Left ventricle myocardium superior (tissue), 1 donor: ENCODE measurements at regions of chr17 and their contacts with region 1.

Region 1: DNA sequence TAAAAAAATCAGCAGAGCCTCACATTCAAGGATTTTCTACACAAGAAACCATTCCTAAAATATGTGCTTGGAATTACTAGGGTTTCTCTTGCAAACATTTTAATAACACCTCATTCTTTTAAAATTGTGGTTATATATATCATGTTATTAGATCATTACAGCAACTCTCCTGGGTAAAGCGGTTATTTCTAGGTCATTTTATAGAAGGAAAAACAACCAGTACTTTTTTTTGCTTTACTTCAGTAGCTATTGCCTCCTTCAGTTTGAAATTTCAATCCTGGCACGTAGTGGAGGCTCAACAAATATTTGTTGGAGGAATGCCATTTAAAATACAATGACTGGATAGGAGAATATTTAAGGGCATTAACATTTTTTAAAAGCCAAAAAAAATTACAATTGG is 220.6 kb downstream of the CDRT15L2 start:
- DNase-seq: no peak
- ATAC-seq: no peak

Region 2: DNA sequence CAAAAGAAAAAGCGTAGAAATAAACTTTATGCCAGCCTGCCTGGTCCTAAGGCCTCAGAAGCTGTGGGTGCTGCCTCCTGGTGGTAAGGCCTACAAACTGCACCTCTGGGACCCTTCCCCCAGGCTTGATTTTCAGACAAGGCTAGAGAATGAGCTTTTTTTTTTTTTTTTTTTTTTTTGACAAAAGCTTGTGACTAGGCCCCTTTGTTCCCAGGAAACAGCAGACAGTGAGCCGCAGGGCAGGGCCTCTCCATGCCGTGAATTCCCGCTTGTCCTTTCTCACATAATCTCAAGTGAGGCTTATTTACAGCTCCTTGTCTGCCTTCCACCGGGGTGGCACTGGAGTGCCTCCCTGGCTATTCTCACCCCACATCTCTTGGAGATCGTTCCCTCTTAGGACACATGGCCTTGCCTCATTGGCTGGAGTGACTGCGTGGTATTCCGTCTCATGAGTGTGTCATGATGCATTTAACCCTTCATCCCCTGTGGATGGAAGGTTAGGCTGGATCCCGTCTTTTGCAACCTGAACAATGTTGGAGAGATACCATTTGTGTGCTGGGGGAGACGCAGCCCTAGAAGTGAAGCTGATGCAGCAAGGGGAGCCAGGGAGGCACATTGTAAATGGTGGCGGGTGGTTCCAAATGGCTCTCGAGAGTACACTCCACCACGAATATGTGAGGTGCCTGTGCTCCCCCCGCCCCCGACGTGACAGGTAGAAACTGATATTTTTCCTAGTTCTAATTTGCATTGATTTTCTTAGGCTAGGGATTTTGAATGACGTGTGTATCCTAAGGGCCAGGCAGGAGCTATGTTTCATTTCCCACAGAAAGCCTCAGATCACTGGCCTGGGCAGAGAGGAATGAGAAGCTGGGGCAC is 193.1 kb after region 1 on chr17:
- intact Hi-C with region 1: loop called (anchors 5 kb)
- DNase-seq: peak; percentile 62
- ATAC-seq: peak; percentile 69

Region 3: GRCh38 chr17:21089145-21089544 is 289.0 kb after region 1 on chr17:
- intact Hi-C with region 1: no loop called
- DNase-seq: no peak
- ATAC-seq: no peak